Cardiac septum (tissue), 1 donor: ENCODE measurements at regions of chr3 and their contacts with region 1.

Region 1: DNA sequence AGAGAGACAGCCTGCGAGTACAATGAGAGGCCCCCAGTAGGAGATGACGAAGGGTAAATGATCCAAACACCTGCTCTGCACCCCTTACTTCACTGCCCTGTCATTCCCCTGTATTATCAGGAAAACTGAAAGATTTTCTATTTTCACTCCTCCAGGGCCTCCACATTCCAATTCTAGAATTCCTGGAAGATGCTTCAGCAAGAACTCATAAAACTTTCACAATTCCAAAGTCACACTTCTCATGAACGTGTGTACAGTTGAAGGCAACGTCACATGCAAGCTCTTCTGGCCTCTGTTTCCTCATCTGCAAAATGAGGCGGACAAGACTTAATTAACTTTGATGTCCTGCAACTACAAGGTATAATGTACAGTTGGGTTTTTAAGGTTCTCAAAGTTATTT is 62.8 kb upstream of the SPATA12 start:
- DNase-seq: no peak

Region 2: GRCh38 chr3:56980798-56981390 is 16.8 kb before region 1 on chr3:
- intact Hi-C with region 1: no loop called
- DNase-seq: peak; percentile 75

Region 3: DNA sequence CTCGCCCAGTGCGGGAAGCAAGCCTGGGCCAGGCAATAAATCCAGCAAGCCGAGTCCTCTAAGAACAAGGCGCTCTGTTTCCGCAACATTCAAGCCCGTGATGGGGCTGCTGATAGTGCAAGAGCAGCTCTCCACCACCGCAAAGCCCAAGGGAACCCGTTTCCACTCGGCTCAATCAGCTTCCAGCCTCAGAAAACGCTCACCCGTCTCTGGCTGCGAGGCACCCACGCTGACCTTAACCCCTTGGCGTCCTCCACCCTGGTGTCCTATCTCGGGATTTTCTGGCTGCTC is 80.6 kb after region 1 on chr3:
- intact Hi-C with region 1: loop called (anchors 5 kb)
- DNase-seq: peak; percentile 78

Region 4: DNA sequence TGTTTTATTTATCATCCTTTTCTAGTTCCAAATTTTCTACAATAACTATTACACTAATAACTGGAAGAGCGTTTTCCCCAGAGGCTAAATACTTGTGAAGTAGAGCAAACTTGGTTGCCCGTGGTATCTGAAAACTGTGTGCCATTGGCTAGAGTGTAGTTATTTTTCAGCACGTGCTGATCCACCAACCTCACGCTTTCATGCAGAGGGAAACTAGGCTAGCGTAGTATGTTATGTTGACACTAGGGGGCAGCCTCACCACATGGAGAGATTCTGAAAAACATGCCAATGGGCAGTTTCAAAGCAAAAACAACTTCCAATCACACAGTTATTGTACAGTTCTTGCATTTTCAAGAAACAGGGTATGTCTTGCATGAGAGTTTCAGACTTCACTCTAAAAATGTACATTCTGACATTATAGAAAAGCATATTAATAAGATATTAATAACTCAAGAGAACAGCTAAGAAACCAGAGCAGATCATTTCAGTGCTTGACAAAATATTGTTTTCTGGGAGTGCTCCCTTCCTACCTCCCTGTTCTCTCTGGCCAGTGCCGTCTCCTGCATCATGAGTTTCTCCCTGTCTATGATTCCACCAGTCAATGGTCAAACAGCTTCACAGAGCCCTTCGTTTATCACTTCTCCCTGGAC is 102.5 kb after region 1 on chr3:
- intact Hi-C with region 1: loop called (anchors 5 kb)
- DNase-seq: no peak

Region 5: DNA sequence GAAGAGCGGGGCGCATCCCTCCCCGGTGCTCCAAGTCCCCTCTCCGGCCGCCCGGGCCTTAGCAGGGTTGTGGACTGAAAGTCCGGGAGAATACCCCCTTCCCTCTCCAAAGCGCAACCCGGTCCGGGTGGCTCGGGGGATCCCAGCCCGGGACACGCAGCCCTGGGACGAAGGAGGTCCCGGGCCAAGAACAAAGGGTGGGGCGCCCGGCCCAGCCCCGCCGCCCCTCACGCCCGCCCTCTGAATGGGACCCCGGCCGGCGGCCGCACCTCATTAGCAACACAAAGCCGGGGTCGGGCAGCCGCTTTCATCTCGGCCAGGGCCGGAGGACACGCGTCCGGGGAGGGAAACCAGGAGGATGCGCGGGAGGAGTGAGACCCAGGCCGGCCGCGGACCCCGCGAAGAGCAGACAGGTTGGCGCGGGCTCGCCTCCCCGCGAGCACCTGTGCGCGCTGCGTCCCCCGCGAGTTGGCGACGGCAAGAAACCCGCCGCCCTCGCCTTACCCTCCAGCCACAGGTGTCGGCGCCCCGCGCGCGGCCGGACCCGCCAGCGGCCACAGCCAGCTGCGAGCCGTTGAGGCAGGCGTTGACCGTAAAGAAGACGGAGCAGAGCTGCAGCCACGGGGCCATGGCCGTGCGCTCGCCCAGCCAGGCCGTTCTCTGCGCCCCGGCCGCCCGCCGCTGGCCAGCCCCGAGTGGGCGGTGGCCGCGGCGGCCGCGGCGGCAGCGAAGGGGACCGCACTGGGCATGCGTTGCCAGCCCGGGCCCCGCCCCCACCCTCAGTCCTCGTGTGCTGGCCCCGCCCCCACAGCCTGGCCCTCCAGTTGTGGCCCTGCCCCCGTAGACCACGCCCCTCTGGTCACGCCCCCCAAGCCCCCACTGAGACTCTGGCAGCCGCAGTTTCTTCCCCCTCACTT is 167.2 kb after region 1 on chr3 and contains the start of gene IL17RD:
- intact Hi-C with region 1: loop called (anchors 5 kb)
- DNase-seq: peak; percentile 88
- total RNA-seq, gene IL17RD: 4.3 TPM

Region 6: DNA sequence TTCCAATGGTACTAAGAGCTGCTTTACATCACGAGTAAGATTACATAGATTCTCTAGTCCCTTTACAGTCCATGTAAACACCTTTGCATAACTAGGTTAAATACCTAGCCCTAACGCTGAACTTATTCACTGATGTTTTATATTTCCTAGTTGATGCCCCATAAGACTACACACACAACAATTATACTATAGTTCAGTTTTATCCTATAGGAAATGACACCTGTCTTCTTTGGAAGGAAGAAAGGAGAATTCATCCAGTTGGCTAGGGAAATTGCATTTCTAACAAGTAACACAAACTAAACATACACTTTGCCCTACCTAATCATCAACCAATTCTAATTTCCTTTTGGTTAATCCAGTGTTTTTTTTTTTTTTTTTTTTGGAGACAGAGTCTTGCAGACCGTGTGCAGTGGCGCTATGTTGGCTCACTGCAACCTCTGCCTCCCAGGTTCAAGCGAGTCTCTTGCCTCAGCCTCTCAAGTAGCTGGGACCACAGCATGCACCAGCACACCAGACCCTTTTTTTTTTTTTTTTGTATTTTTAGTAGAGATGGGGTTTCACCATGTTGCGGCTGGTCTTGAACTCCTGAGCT is 572.3 kb after region 1 on chr3:
- intact Hi-C with region 1: no loop called
- DNase-seq: no peak